Mammary epithelial cell (primary cell): ENCODE measurements at regions of chr14 and their contacts with region 1.

Region 1: GRCh38 chr14:77457522-77458290 is at the starts of genes AHSA1 and VIPAS39:
- DNase-seq: peak; percentile 99
- H3K4me3 ChIP-seq: peak within 1 kb of the TSS; percentile 90 to 96 (median 94)
- H3K27ac ChIP-seq: peak within 1 kb of the TSS; percentile 89
- H3K4me1 ChIP-seq: peaks cover 18% of the 10 kb centered on the region
- H3K27me3 ChIP-seq: no peaks in the 10 kb centered on the region
- CTCF ChIP-seq: no peak
- total RNA-seq, gene AHSA1: 63.7 to 140 TPM
- total RNA-seq, gene VIPAS39: 15.3 to 25.7 TPM

Region 2: DNA sequence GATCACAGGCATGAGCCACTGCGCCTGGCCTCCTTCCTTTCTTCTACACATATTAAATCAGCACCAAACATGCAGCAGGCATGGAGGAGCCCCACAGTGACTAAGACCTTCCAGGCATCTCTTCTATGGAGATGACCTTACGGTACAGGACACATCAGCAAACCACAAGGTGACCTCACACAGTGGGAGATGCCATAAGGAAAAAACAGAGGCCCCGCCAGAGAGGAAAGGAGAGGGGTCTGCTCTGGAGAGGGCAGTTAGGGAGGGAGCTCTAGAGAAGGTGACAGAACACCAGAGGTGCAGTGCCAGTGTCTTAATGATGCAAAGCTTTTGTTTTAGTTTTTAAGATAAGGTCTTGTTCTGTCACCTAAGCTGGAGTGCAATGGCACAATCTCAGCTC is 1162.8 kb before region 1 on chr14:
- CTCF ChIA-PET with region 1: no interaction called
- dilution Hi-C with region 1: no loop called
- in situ Hi-C with region 1: no loop called
- intact Hi-C with region 1: no loop called
- DNase-seq: no peak
- H3K4me3 ChIP-seq: no peak overlapping the region
- H3K27ac ChIP-seq: no peak overlapping the region
- H3K4me1 ChIP-seq: no peaks in the 10 kb centered on the region
- H3K27me3 ChIP-seq: peaks cover 2% of the 10 kb centered on the region
- CTCF ChIP-seq: no peak

Region 3: DNA sequence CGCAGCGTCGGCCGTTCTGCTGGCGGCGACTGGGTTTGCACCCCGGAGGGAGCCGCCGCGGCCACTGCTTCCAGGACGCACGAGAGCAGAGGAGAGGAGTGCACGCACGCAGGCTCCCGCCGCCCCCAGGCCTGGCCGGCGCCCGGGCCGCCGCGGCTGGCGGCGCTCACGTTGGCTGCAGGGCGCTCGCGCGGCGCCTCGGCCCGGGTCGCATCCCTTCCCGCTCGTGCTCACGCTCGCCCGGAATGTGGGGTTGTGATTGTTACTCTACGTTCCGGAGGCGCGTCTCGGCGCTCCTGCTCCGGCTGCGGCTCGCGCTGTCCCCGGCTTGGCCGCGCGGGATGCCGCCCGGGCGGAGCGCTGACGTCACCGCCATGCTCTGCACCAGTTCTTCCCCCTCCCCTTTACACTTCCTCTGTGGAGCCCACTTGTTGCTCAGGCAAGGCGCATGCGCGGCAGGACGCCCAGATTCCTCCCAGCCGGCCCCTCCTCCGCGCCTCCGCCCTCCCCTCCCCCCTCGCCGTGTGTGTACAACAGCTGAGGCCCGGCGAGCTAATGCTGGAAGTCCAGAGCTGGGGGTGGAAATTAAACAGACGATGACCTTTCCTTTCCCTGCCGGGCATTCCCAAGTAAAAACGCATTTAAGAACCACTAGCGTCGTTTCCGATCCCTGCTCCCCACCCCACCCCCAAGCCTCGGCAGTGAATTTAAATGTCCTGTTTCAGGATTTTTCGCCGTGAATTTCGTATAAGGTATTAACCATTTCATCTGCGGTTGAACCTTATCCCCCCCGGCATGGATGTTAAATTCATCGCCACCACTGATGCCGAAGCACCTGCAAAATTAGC is 429.1 kb before region 1 on chr14 and contains the start of gene IRF2BPL:
- CTCF ChIA-PET with region 1: no interaction called
- dilution Hi-C with region 1: no loop called
- in situ Hi-C with region 1: no loop called
- intact Hi-C with region 1: no loop called
- DNase-seq: peak; percentile 96
- H3K4me3 ChIP-seq: peak within 1 kb of the TSS; percentile 56 to 88 (median 79)
- H3K27ac ChIP-seq: peak within 1 kb of the TSS; percentile 81
- H3K4me1 ChIP-seq: peaks cover 48% of the 10 kb centered on the region
- H3K27me3 ChIP-seq: no peaks in the 10 kb centered on the region
- CTCF ChIP-seq: no peak
- total RNA-seq, gene IRF2BPL: 41.3 to 49.4 TPM

Region 4: DNA sequence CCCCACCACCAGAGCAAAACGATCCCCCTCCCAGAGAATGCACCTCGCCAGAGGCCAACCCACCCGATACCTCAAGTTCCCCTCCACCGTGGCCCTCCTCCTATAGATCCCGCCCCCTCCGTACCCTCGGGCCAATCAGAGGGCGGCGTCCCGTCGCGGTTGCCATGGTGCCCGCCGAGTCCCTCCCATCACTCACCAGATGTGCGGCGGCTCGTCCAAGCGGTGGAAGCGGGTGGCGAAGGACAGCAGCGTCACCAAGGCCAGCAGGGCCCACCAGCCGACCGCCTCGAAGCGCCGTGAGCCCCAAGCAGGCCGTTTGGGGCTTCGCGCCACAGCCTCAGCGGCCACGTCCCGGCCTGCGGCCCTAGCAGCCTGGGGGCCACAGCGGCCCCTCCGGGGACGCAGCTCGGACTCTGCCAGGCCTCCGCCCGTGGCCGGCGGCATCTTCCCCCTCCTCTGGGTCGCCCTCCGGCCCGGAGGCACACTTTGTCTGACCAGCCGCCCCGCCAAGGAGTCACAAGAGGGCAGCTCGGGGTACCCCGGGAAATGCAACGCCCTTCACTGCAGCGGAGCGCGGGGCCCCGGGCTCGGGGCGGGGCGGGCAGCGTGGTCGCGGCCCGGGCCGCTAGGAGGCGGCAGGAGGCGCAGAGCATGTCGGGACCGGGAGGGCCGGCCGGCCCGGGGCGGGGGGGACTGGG is 137.3 kb before region 1 on chr14 and contains the start of gene POMT2:
- CTCF ChIA-PET with region 1: no interaction called
- dilution Hi-C with region 1: no loop called
- in situ Hi-C with region 1: no loop called
- intact Hi-C with region 1: loop called (anchors 5 kb)
- DNase-seq: peak; percentile 88
- H3K4me3 ChIP-seq: peak within 1 kb of the TSS; percentile 89 to 92 (median 90)
- H3K27ac ChIP-seq: peak within 1 kb of the TSS; percentile 87
- H3K4me1 ChIP-seq: peaks cover 38% of the 10 kb centered on the region
- H3K27me3 ChIP-seq: no peaks in the 10 kb centered on the region
- CTCF ChIP-seq: peak in 1 of 2 donors; percentile 34
- total RNA-seq, gene POMT2: 17.0 to 38.4 TPM

Region 5: GRCh38 chr14:77554207-77554606 is 96.5 kb after region 1 on chr14:
- CTCF ChIA-PET with region 1: no interaction called
- dilution Hi-C with region 1: no loop called
- in situ Hi-C with region 1: no loop called
- intact Hi-C with region 1: loop called (anchors 1 kb)
- DNase-seq: no peak
- H3K4me3 ChIP-seq: no peak overlapping the region
- H3K27ac ChIP-seq: no peak overlapping the region
- H3K4me1 ChIP-seq: no peaks in the 10 kb centered on the region
- H3K27me3 ChIP-seq: no peaks in the 10 kb centered on the region
- CTCF ChIP-seq: no peak

Region 6: DNA sequence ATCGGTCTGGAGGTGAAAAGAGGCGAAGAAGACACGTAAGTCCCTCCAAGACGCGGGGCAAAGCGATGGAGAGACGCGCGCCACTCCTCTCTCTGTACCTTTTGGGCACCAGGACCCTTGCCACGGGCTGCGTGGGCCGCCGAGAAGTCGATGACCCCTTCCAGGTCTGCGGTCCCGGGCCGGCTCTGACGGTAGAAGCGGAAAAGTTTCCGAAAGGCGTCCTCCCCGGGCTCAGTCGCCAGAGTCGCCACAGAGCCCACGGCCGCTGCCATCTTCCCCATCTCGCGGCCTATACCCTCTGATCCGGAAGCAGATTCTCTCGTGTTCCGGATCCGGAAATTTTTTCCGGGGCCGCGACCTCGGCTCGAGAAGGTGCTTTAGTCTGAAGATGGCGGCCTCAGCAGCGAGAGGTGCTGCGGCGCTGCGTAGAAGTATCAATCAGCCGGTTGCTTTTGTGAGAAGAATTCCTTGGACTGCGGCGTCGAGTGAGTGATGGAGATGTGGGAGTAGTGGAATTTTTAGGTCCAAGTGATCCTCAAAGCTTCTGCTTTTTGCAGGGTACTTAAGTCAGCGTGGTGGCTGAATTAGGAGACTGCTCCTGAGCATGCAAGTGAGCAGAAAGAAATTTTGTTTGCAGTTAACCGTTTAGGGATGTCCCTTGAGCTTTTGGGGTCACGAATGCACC is 250.2 kb after region 1 on chr14 and contains the starts of genes ALKBH1 and SLIRP:
- CTCF ChIA-PET with region 1: no interaction called
- dilution Hi-C with region 1: no loop called
- in situ Hi-C with region 1: loop called in 1 of 2 experiments (anchors 25 kb)
- intact Hi-C with region 1: loop called (anchors 1 kb)
- DNase-seq: peak; percentile 82
- H3K4me3 ChIP-seq: peak within 1 kb of the TSS; percentile 77 to 99 (median 92)
- H3K27ac ChIP-seq: peak within 1 kb of the TSS; percentile 64
- H3K4me1 ChIP-seq: peaks cover 14% of the 10 kb centered on the region
- H3K27me3 ChIP-seq: no peaks in the 10 kb centered on the region
- CTCF ChIP-seq: no peak
- total RNA-seq, gene ALKBH1: 8.0 to 14.7 TPM
- total RNA-seq, gene SLIRP: 51.7 to 161 TPM